ENCODE measurements at regions of chr9 and their contacts with region 1.

Region 1: DNA sequence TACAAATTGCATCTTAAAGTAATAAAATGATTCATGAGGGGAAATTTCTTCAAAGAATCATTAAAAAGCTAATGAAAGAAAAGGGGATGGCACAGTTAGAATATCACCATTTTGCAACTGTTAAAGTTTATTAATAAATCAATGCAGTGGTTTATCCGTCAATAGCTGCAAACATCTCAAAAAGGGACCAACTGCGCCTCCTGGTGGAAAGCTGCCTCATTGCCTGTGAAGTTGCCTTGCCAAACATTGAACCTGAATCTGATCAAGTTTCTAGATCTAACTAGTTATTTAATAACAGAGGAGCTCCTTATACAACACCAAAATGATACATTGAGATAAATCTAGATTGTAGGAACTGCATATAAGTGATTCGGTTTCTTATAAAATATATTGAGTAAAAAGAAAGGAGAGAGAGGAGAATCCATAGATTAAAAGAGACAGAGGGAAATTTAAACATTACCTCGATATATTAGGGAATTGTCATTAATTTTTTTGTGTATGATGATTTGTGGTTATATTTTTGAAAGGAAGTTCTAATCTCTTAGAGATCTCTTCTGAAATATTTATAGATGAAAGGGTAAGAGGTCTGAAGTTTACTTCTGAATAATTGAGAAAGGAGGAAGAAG is 6.9 kb upstream of the NDUFB6 start:
- DNase-seq: peak; percentile 20 to 95 (median 78)

Region 2: GRCh38 chr9:32442433-32442832 is 137.4 kb before region 1 on chr9:
- intact Hi-C with region 1: loop called (anchors 10 kb)
- DNase-seq: no peak

Region 3: GRCh38 chr9:32603914-32604741 is 24.3 kb after region 1 on chr9:
- intact Hi-C with region 1: no loop called
- DNase-seq: no peak

Region 4: DNA sequence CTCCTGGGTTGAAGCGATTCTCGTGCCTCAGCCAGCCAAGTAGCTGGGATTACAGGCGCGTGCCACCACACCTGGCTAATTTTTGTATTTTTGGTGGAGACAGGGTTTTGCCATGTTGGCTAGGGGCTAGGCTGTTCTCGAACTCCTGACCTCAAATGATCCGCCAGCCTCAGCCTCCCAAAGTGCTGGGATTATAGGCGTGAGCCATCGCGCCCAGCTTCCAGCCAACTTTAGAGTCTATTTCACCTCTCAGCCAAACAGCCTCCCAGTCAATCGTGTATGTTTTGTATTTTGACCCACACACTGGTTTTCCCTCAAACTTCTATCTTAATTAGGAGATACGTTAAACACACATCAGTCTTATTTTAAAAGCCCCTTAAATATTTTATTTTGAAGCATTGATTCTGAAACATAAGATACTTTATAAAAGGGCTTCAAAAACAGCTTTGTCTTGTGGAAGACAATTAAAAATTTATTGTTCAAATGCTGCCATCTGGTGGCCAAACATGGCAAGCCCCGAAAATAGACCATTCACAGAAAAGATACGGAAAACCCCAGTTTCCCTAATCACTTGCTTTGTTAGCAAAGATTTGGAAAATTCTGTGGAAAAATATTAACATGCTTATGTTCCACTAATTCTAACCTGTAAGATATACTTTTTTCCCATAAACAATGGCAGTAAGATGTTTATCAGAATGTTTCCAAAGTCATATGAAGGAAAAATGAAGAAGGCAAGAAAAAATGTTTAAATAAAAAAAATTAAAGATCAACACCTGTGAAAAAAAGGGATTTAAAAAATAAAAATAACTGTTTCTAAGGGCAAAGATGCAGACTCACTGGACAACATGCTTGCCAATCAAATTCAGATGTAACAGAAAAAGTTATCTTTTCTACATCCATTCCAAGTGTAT is 388.5 kb after region 1 on chr9:
- intact Hi-C with region 1: loop called (anchors 2 kb)
- DNase-seq: peak in 7 of 10 donors; percentile 22 to 83 (median 66)

Measured in posterior cingulate gyrus (tissue), 11 donors.